Colonic mucosa (tissue), 4 donors: ENCODE measurements at regions of chr11 and their contacts with region 1.

Region 1: GRCh38 chr11:57712256-57713150 is at the start of gene TMX2:
- DNase-seq: peak; percentile 94
- H3K4me3 ChIP-seq: peak within 1 kb of the TSS; percentile 64
- H3K27ac ChIP-seq: peak within 1 kb of the TSS; percentile 92
- H3K4me1 ChIP-seq: peaks cover 24% of the 10 kb centered on the region
- H3K27me3 ChIP-seq: no peaks in the 10 kb centered on the region
- CTCF ChIP-seq: no peak
- total RNA-seq, gene TMX2: 92.1 to 145 TPM

Region 2: DNA sequence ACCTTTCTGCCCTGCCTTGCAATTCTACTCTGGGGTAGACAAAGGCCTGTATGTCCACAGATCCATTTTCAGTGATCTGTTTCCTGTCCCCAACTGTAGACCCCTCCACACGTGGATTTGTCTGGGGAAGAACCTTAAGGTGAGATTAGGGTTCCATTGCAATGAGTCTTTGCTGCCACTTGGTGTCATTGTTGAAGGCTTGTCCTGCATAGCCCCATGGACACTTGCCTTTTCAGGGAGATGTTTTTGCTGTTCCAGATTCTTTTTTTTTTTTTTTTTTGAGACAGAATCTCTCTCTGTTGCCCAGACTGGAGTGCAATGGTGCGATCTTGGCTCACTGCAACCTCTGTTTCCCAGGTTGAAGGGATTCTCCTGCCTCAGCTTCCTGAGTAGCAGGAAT is 93.2 kb before region 1 on chr11:
- intact Hi-C with region 1: no loop called
- DNase-seq: no peak
- H3K4me3 ChIP-seq: no peak overlapping the region
- H3K27ac ChIP-seq: no peak overlapping the region
- H3K4me1 ChIP-seq: no peaks in the 10 kb centered on the region
- H3K27me3 ChIP-seq: no peaks in the 10 kb centered on the region
- CTCF ChIP-seq: no peak

Region 3: DNA sequence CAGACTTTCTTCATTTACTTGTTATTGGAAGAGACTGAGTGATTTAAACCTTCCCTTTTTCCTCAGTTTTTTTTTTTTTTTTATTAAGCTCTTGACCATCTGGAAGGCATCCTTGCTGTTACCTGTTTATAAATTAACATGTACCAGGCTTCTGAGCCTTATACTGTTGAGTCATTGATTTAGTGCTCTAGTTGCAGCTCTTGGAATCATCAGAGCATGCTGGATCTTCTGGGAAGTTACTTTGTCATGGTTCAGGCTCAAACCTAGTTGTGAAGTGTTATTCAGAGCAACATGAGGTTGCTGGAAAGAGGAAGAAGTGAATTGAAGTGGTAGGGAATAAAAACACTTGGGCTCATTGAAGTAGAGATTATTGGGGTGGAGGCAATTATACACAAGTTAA is 38.3 kb before region 1 on chr11:
- intact Hi-C with region 1: loop called (anchors 5 kb)
- DNase-seq: no peak
- H3K4me3 ChIP-seq: no peak overlapping the region
- H3K27ac ChIP-seq: no peak overlapping the region
- H3K4me1 ChIP-seq: peaks cover 5% of the 10 kb centered on the region
- H3K27me3 ChIP-seq: no peaks in the 10 kb centered on the region
- CTCF ChIP-seq: no peak